ENCODE measurements at regions of chr4 and their contacts with region 1.

Region 1: DNA sequence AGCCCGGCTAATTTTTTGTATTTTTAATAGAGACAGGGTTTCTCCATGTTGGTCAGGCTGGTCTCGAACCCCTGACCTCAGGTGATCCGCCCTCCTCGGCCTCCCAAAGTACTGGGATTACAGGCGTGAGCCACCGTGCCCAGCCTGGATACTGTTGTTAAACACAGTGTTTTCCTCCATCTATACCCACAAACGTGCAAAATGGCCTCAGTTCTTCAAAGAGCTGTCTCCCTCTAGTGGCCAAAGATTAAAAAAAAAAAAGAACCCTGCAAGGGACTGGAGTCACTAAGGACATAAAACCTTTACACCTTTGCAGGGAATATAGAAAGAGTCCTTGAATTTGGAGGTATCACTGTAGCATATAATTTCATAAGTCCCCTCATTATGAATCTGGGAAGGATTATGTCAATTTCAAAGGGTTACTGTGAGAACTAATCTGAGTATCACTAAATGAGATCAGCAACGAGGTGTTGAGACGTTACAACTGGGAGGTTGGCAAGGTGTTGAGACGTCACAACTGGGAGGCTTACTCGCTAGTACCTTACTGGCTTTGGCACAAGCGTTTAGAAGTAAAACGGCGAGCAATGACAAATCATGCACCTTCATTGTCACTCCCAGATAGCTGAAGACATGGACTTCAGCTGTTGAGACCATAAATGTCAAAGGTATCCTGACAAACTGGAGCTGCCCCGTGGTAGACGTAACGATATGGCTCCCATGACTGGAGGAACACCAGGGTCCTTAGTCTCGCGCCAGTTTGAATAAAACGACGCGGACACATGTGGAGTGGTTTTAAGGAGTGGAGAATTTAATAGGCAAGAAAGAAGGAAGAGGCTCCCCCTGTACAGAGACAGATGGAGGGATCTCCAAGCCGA is 33.4 kb upstream of the ENPP6 start:
- DNase-seq: peak; percentile 49
- ATAC-seq: peak; percentile 85
- H3K4me3 Mint-ChIP-seq: no peak overlapping the region
- H3K27ac Mint-ChIP-seq: peak overlapping the region; percentile 63
- H3K4me1 Mint-ChIP-seq: peaks cover 13% of the 10 kb centered on the region
- H3K27me3 Mint-ChIP-seq: peaks cover 2% of the 10 kb centered on the region

Region 2: DNA sequence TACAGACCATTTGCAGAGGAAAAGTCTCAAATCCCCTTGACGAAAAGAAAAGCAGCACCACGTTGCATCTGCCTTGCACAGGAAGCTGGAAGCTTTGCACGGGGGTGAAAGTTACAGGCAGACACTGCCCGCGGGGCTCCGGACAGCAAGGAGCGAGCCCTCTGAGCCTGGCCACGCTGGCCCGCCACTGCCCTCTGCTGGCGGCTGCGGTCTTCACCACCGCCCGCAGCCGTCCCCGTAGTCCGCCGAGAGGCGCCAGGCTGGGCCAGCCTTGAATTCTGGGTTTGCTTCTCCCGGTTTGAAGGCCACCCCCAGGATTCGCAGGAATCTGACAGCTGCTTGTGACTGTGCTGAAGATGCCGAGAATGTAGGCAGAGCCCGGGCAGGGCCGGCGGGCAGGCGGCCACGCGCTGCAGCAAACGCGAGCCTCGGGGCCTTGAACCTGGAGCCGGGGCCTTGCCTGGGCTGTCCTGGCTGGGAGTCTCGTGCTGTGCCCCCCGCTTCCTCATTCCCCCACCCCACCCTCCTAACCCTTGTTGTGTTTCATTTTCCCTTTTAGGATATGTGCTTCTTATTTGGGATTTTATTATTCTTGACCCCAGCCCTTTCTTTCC is 82.5 kb before region 1 on chr4:
- CTCF ChIA-PET with region 1: interaction called, 15 read pairs
- POLR2A ChIA-PET with region 1: no interaction called
- DNase-seq: peak; percentile 66
- ATAC-seq: peak; percentile 96
- H3K4me3 Mint-ChIP-seq: no peak overlapping the region
- H3K27ac Mint-ChIP-seq: no peak overlapping the region
- H3K4me1 Mint-ChIP-seq: peaks cover 9% of the 10 kb centered on the region
- H3K27me3 Mint-ChIP-seq: peaks cover 47% of the 10 kb centered on the region

Measured in activated CD8-positive, alpha-beta T cell treated with anti-CD3 and anti-CD28 coated beads, Interleukin-2, amount 10 ng/mL, durations not matched to agents 7 days and 5 days (primary cell).